PC-3 (cell line): ENCODE measurements at regions of chr16 and their contacts with region 1.

Region 1: DNA sequence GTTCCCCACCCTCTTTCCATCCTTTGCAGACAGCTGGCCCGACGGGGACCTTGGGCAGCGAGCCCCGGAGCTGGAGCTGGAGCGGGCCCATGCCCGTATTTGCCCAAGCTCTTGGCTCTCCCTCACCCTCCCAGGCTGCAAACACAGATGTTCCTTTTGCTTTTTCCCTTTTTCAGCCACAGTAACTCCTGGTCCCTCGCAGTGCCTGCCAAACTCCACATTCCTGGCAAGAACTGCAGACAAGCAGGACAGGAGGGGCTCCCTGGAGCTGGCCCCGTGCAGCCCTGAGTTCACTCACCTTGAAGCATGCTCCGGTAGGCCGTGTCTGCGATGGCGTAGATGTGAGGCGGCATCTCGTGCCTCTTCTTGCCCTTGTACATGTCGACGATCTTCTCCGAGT is 33.9 kb downstream of the MYH11 start:
- DNase-seq: no peak
- ATAC-seq: no peak
- H3K4me3 ChIP-seq: no peak overlapping the region
- H3K27ac ChIP-seq: no peak overlapping the region
- H3K4me1 ChIP-seq: no peaks in the 10 kb centered on the region
- H3K27me3 ChIP-seq: no peaks in the 10 kb centered on the region
- CTCF ChIP-seq: no peak

Region 2: GRCh38 chr16:15765880-15766279 is 57.1 kb before region 1 on chr16:
- CTCF ChIA-PET with region 1: interaction called, 3 read pairs
- POLR2A ChIA-PET with region 1: no interaction called
- intact Hi-C with region 1: loop called (anchors 1 kb)
- DNase-seq: peak; percentile 62
- ATAC-seq: peak; percentile 78
- H3K4me3 ChIP-seq: no peak overlapping the region
- H3K27ac ChIP-seq: no peak overlapping the region
- H3K4me1 ChIP-seq: no peaks in the 10 kb centered on the region
- H3K27me3 ChIP-seq: no peaks in the 10 kb centered on the region
- CTCF ChIP-seq: peak; percentile 77

Region 3: DNA sequence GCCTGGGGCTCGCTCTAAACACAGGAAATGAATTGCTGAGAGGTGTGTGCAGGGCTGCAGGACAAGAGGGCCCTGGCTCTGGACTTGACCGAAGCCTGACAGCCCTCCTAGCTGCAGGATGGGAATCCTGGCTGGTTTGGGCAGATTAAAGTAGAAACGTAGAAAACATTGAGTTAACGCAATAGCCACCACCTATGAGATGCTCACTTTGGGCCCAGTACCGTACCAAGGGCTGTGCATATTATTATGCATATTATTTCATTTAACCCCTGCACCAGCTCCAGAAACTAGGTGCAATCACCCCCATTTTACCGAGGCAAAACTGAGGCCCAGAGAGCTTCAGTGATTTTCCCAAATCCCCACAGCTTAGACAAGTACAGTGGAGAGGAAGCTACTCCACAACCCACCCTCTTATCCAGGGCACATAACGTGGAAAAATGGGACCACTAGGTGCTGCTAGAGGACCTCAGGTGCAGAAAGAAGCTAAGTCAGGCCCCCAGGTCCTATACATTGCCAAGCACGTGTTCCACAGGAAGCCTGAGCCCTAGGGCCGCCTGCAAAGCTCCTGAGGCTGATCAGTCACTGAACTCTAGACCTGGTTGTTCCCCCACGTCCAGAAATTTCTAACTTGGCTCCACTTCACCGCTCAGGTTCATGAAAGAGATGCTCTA is 45.3 kb before region 1 on chr16:
- CTCF ChIA-PET with region 1: interaction called, 18 read pairs
- POLR2A ChIA-PET with region 1: no interaction called
- intact Hi-C with region 1: no loop called
- DNase-seq: peak; percentile 66
- ATAC-seq: peak; percentile 84
- H3K4me3 ChIP-seq: no peak overlapping the region
- H3K27ac ChIP-seq: no peak overlapping the region
- H3K4me1 ChIP-seq: no peaks in the 10 kb centered on the region
- H3K27me3 ChIP-seq: no peaks in the 10 kb centered on the region
- CTCF ChIP-seq: peak; percentile 62

Region 4: GRCh38 chr16:15983898-15984297 is 160.9 kb after region 1 on chr16:
- CTCF ChIA-PET with region 1: no interaction called
- POLR2A ChIA-PET with region 1: no interaction called
- intact Hi-C with region 1: no loop called
- DNase-seq: no peak
- ATAC-seq: no peak
- H3K4me3 ChIP-seq: no peak overlapping the region
- H3K27ac ChIP-seq: no peak overlapping the region
- H3K4me1 ChIP-seq: no peaks in the 10 kb centered on the region
- H3K27me3 ChIP-seq: no peaks in the 10 kb centered on the region
- CTCF ChIP-seq: no peak

Region 5: DNA sequence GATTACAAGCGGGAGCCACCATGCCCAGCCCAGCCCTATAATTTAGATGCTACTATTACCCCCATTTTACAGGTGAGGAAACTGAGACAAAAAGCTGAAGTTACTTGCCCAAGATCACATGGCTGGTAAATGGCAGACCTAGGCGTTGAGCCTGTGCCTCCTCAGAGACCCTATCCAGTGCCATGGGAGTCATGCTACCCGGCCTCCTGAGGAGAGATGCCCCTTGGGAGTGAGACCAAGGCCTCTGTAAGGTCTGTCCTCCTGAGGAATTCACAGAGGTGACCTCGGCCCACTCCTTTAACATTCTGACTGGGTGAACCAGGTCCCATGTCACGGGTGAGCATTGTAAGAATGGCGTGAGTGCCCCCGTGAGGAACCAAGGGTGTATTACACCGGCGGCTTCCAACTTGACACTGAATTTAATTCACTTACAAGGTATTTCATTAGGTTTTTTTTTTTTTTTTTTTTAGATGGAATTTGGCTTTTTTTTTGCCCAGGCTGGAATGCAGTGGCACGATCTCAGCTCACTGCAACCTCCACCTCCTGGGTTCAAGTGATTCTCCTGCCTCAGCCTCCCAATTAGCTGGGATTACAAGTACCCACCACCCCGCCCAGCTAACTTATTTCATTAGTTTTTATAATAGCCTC is 304.6 kb after region 1 on chr16:
- CTCF ChIA-PET with region 1: no interaction called
- POLR2A ChIA-PET with region 1: no interaction called
- intact Hi-C with region 1: loop called (anchors 5 kb)
- DNase-seq: peak; percentile 74
- ATAC-seq: peak; percentile 76
- H3K4me3 ChIP-seq: no peak overlapping the region
- H3K27ac ChIP-seq: no peak overlapping the region
- H3K4me1 ChIP-seq: no peaks in the 10 kb centered on the region
- H3K27me3 ChIP-seq: no peaks in the 10 kb centered on the region
- CTCF ChIP-seq: peak; percentile 73